Psoas muscle (tissue), 8 donors: ENCODE measurements at regions of chr5 and their contacts with region 1.

Region 1: GRCh38 chr5:117788594-117788993 is 1199.8 kb downstream of the DTWD2 start:
- DNase-seq: no peak
- ATAC-seq: no peak
- H3K4me3 ChIP-seq: no peak overlapping the region
- H3K27ac ChIP-seq: no peak overlapping the region
- H3K4me1 ChIP-seq: no peaks in the 10 kb centered on the region
- H3K27me3 ChIP-seq: no peaks in the 10 kb centered on the region
- CTCF ChIP-seq: no peak

Region 2: DNA sequence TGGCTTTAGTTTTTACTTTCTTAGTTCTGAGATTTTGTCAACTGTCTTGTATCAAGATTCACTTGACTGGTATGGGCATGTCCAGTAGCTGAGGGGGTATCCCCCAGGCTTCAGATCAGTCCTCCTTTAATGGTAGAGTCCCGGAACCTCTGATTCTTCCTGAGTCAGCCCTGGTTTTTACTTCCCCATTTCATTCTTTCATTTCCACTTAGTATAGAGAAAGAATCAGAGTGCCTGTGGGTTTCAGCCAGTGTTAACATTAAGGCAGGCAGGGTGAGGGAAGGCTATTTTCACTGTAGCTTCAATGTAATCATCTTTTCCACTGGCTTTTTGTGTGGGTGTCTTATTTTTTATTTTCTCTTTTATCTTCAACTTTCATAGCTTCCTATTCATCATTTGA is 1712.1 kb before region 1 on chr5:
- intact Hi-C with region 1: loop called in 1 of 2 experiments (anchors 10 kb)
- DNase-seq: no peak
- ATAC-seq: no peak
- H3K4me3 ChIP-seq: no peak overlapping the region
- H3K27ac ChIP-seq: no peak overlapping the region
- H3K4me1 ChIP-seq: no peaks in the 10 kb centered on the region
- H3K27me3 ChIP-seq: peaks cover 0 to 2% (median 0%) of the 10 kb centered on the region in 3 donors
- CTCF ChIP-seq: no peak

Region 3: DNA sequence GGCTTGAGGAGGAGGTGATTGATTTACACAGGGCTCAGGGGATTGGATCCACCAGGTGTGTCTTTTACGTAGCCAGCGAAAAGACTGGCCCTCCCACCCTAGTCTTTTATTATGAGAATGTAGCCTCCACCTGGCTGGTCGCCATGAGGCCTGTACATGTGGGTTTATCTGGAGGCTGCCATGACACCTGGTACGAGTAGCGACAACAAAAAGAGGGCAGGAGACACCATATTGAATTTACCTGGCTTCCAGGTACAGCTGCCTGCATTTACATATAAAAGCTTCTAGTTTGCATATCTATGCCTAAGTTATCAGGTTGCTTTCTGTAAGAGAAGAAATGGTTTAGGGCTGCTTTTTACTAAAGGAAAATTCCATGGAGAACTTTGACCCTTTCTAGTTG is 40.3 kb before region 1 on chr5:
- intact Hi-C with region 1: no loop called
- DNase-seq: no peak
- ATAC-seq: no peak
- H3K4me3 ChIP-seq: no peak overlapping the region
- H3K27ac ChIP-seq: no peak overlapping the region
- H3K4me1 ChIP-seq: no peaks in the 10 kb centered on the region
- H3K27me3 ChIP-seq: no peaks in the 10 kb centered on the region
- CTCF ChIP-seq: no peak

Region 4: GRCh38 chr5:117859176-117859575 is 70.6 kb after region 1 on chr5:
- intact Hi-C with region 1: no loop called
- DNase-seq: no peak
- ATAC-seq: no peak
- H3K4me3 ChIP-seq: no peak overlapping the region
- H3K27ac ChIP-seq: no peak overlapping the region
- H3K4me1 ChIP-seq: no peaks in the 10 kb centered on the region
- H3K27me3 ChIP-seq: no peaks in the 10 kb centered on the region
- CTCF ChIP-seq: no peak